Activated naive CD4-positive, alpha-beta T cell treated with anti-CD3 and anti-CD28 coated beads for 36 hours (primary cell): ENCODE measurements at regions of chr20 and their contacts with region 1.

Region 1: GRCh38 chr20:18412221-18412901 is 54.5 kb downstream of the DZANK1 start:
- DNase-seq: no peak
- H3K4me3 Mint-ChIP-seq: no peak overlapping the region
- H3K27ac Mint-ChIP-seq: no peak overlapping the region
- H3K4me1 Mint-ChIP-seq: peaks cover 4% of the 10 kb centered on the region
- H3K27me3 Mint-ChIP-seq: peaks cover 2% of the 10 kb centered on the region

Region 2: DNA sequence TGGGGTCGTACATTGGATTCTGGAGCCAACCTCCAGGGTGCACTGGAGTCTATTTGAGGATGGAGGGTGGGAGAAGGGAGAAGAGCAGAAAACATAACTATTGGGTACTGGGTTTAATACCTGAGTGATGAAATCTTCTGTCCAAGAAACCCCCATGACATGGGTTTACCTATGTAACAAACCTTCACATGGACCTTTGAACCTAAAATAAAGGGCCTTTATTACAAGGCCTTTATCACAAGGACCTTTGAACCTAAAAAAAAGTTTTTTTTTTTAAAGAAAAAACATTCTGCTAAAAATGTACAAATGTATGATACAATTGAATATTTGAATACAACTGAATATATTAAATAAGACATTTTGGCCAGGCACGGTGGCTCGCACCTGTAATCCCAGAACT is 162.1 kb before region 1 on chr20:
- CTCF ChIA-PET with region 1: no interaction called
- intact Hi-C with region 1: no loop called
- DNase-seq: no peak
- H3K4me3 Mint-ChIP-seq: no peak overlapping the region
- H3K27ac Mint-ChIP-seq: no peak overlapping the region
- H3K4me1 Mint-ChIP-seq: no peaks in the 10 kb centered on the region
- H3K27me3 Mint-ChIP-seq: peaks cover 4% of the 10 kb centered on the region

Region 3: GRCh38 chr20:18287915-18288748 is 124.2 kb before region 1 on chr20 and contains the start of gene ZNF133:
- CTCF ChIA-PET with region 1: no interaction called
- intact Hi-C with region 1: loop called (anchors 1 kb)
- DNase-seq: peak; percentile 97
- H3K4me3 Mint-ChIP-seq: peak within 1 kb of the TSS; percentile 95
- H3K27ac Mint-ChIP-seq: peak within 1 kb of the TSS; percentile 98
- H3K4me1 Mint-ChIP-seq: peaks cover 12% of the 10 kb centered on the region
- H3K27me3 Mint-ChIP-seq: peaks cover 12% of the 10 kb centered on the region
- total RNA-seq, gene ZNF133: 5.2 to 5.3 TPM

Region 4: GRCh38 chr20:18507218-18508021 is 95.1 kb after region 1 on chr20 and contains the start of gene SEC23B:
- CTCF ChIA-PET with region 1: interaction called, 8 read pairs
- intact Hi-C with region 1: loop called (anchors 1 kb)
- DNase-seq: peak; percentile 99
- H3K4me3 Mint-ChIP-seq: peak within 1 kb of the TSS; percentile 100
- H3K27ac Mint-ChIP-seq: peak within 1 kb of the TSS; percentile 100
- H3K4me1 Mint-ChIP-seq: peaks cover 45% of the 10 kb centered on the region
- H3K27me3 Mint-ChIP-seq: no peaks in the 10 kb centered on the region
- total RNA-seq, gene SEC23B: 66.9 to 69.2 TPM

Region 5: DNA sequence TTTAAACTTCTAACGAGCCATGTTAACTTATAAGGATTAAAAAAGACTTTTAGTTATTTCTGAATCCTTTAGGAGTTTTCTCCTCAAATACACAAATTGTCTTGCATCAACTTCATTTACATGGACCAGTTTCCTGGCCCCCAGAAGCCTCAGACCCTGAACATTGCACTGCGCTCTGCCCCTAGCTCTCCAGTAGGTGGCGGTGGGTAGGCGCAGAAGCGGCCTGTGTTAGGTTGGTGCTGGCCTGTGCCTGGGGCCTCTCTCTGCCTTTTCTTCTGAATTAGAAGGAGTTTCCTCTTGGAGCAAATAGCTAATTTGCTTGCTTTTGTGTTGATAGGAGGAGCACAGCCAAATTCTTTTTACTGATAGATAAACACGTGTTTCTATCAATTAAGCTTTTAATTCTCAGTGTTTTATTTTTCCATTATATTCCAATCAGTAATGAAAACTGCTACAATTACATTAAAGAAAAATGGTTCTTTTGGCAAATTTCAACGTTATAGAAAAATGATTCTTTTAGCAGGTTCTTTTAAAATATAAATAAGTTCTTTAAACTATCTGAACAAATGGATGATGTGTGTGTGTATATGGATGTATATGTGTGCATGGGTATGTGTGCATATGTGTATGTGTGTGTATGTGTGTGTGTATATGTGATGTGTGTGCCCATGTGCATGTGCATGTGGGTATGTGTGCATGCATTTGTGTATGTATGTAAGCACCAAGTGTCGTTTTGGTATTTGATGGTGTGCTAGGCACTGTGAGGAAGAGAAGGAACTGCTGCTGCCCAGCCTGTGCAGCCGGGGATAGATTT is 220.0 kb after region 1 on chr20:
- CTCF ChIA-PET with region 1: interaction called, 4 read pairs
- intact Hi-C with region 1: loop called (anchors 1 kb)
- DNase-seq: peak; percentile 66
- H3K4me3 Mint-ChIP-seq: no peak overlapping the region
- H3K27ac Mint-ChIP-seq: no peak overlapping the region
- H3K4me1 Mint-ChIP-seq: no peaks in the 10 kb centered on the region
- H3K27me3 Mint-ChIP-seq: no peaks in the 10 kb centered on the region

Region 6: GRCh38 chr20:19056909-19057308 is 644.5 kb after region 1 on chr20:
- CTCF ChIA-PET with region 1: no interaction called
- intact Hi-C with region 1: loop called (anchors 2 kb)
- DNase-seq: peak; percentile 28
- H3K4me3 Mint-ChIP-seq: no peak overlapping the region
- H3K27ac Mint-ChIP-seq: no peak overlapping the region
- H3K4me1 Mint-ChIP-seq: no peaks in the 10 kb centered on the region
- H3K27me3 Mint-ChIP-seq: no peaks in the 10 kb centered on the region

Region 7: GRCh38 chr20:19130081-19130984 is 718.0 kb after region 1 on chr20:
- CTCF ChIA-PET with region 1: no interaction called
- intact Hi-C with region 1: no loop called
- DNase-seq: no peak
- H3K4me3 Mint-ChIP-seq: no peak overlapping the region
- H3K27ac Mint-ChIP-seq: no peak overlapping the region
- H3K4me1 Mint-ChIP-seq: no peaks in the 10 kb centered on the region
- H3K27me3 Mint-ChIP-seq: peaks cover 3% of the 10 kb centered on the region

Region 8: GRCh38 chr20:19661717-19662636 is 1249.6 kb after region 1 on chr20:
- CTCF ChIA-PET with region 1: no interaction called
- intact Hi-C with region 1: loop called (anchors 1 kb)
- DNase-seq: peak; percentile 63
- H3K4me3 Mint-ChIP-seq: no peak overlapping the region
- H3K27ac Mint-ChIP-seq: no peak overlapping the region
- H3K4me1 Mint-ChIP-seq: no peaks in the 10 kb centered on the region
- H3K27me3 Mint-ChIP-seq: peaks cover 11% of the 10 kb centered on the region